ENCODE measurements at regions of chr5 and their contacts with region 1.

Region 1: DNA sequence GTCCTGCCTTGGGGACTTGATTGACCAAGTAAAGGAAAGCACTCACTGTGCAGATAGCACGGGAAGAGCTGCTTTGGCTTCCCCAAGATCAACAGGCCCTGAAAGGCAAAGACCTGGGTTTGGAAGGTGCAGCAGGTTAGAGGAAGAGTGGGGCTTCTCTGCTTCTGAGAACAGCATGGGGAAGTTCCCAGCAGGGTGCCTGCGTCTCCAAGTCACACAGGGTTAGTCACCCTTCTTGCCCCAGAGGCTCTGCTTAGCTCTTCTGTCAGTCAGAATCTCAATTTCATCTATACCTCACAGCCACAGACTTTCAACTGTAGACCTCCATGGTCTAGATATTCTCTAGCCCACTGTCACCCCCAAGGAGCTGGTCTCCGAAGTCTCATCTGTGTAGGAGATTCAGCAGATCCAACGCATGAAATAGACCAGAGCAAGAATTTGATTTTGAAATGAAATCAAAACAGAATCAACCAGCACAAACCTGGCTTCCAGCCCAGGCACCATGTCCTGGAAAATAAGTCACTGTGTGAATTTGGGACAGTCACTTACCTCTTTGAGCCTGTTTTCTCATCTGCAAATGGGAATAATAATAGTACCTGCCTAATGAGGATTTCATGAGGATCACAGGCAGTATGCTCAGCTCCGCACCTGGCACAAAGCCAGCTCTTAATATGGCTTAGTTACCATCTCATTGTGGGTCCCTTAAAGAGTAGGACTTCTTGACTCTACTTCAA is 64.0 kb downstream of the SFXN1 start:
- DNase-seq: no peak
- ATAC-seq: peak in 3 of 4 donors; percentile 33 to 52 (median 39)
- H3K4me3 ChIP-seq: no peak overlapping the region
- H3K27ac ChIP-seq: no peak overlapping the region
- H3K4me1 ChIP-seq: no peaks in the 10 kb centered on the region
- H3K27me3 ChIP-seq: no peaks in the 10 kb centered on the region
- CTCF ChIP-seq: no peak
- POLR2A ChIP-seq: no peak

Region 2: DNA sequence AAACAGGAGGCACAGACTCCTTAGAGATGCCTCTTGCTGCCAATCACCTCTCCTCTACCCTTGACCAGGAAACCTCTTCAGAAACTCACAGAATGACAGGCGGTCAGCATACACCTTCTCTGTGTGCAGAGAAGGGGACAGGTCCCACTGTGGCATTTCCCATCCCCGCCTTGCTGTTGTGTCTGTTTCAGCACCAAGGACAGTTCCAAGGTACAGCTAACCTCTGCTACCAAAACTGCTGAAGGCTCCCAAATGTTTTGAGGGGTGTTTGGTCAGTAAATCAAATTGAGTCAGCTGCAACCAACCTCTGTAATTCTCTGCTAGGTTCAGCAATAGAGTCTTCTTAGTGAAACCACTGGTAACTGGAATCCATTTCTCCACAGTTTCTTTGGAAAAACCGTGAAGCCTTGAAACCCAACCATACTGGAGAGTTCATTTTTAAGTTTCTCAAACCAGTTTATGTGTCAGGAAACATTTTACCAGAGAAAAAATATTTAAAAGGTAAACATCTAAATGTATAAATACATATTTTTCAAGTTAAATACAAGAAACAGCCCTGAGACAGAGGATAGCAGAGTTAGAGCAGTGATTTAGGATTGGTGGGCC is 220.4 kb before region 1 on chr5:
- intact Hi-C with region 1: no loop called
- DNase-seq: no peak
- ATAC-seq: peak in 1 of 4 donors; percentile 34
- H3K4me3 ChIP-seq: no peak overlapping the region
- H3K27ac ChIP-seq: no peak overlapping the region
- H3K4me1 ChIP-seq: no peaks in the 10 kb centered on the region
- H3K27me3 ChIP-seq: no peaks in the 10 kb centered on the region
- CTCF ChIP-seq: no peak
- POLR2A ChIP-seq: no peak

Region 3: GRCh38 chr5:175718401-175719108 is 176.2 kb after region 1 on chr5:
- intact Hi-C with region 1: loop called in 1 of 2 experiments (anchors 10 kb)
- DNase-seq: peak in 2 of 3 donors; percentile 53 to 60
- ATAC-seq: peak; percentile 80 to 96 (median 86)
- H3K4me3 ChIP-seq: no peak overlapping the region
- H3K27ac ChIP-seq: no peak overlapping the region
- H3K4me1 ChIP-seq: peaks cover 0 to 10% (median 2%) of the 10 kb centered on the region in 4 donors
- H3K27me3 ChIP-seq: no peaks in the 10 kb centered on the region
- CTCF ChIP-seq: peak; percentile 62 to 85 (median 76)
- POLR2A ChIP-seq: no peak